ENCODE measurements at regions of chr10 and their contacts with region 1.

Region 1: DNA sequence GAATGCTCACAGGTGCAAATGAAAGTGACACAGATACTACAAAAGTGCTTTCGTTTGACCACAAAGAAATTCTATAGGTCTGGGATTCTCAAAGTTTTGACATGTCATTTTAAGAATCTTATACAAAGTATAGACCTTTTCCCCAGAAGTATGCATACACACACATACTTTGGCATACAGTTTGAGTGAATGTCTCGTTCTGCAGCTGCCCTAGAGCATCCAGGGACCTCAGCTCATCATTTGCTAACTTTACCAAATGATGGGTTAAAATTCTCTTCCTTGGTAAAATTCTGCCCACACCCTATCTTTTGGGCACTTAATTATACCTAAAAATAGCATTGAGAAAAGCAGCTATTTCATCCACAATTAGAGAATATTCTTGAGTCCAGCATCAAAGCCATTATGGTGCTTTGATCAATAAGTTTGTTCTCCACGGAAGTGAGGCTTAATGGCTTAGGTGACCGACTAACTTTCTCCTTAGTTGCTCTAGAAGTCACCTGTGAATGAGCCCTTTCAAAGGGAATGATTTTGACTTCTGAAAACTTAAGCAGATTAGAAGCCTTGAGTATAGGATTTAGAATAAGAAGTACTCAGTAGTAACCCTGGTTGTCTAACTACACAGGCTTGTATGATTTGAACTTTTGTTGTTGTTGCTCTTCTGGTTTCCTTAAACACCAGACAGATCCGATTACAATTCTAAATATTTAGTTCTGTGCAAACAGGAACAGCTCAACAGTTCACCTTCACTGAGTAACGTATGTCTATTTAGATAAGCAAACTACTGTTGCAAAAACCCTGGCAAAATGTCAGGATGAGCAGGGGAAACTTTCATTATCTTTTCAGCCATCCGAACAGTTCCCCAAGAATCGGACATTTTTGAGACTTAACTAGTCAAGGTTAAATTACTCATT is 70.6 kb downstream of the CNNM2 start:
- DNase-seq: peak; percentile 52 to 94 (median 65)
- ATAC-seq: peak; percentile 88
- H3K4me3 ChIP-seq: no peak overlapping the region
- H3K27ac ChIP-seq: peak overlapping the region; percentile 95
- H3K4me1 ChIP-seq: peaks cover 28 to 33% of the 10 kb centered on the region in 2 experiments
- H3K27me3 ChIP-seq: no peaks in the 10 kb centered on the region
- CTCF ChIP-seq: no peak
- EP300 ChIP-seq: peak; percentile 97
- POLR2A ChIP-seq: no peak
- RAD21 ChIP-seq: no peak

Region 2: DNA sequence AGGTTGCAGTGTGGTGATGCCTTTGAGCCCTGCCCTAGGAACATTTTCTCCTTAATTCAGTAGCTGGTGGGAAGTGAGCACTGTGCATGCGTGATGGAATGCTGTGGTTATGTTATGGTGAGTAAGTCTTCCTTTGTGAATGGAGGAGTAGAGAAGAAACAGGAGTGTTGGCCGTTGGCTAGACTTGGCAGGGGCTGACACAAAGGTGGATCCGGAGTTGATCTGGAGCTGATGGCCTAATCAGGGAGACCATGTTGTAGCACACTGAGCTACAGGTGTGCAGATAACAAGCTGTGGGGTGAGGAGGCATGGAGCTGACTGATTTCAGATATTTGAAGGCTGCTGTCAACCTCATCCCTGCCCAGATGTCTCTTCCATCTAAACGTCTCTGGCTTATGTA is 51.8 kb after region 1 on chr10:
- CTCF ChIA-PET with region 1: no interaction called
- POLR2A ChIA-PET with region 1: no interaction called
- in situ Hi-C with region 1: no loop called
- intact Hi-C with region 1: loop called (anchors 2 kb)
- DNase-seq: peak in 3 of 4 experiments; percentile 15 to 74 (median 46)
- ATAC-seq: peak; percentile 67
- H3K4me3 ChIP-seq: no peak overlapping the region
- H3K27ac ChIP-seq: peak overlapping the region; percentile 46; the same call in 1 of the 3 replicates
- H3K4me1 ChIP-seq: peaks cover 19 to 22% of the 10 kb centered on the region in 2 experiments
- H3K27me3 ChIP-seq: no peaks in the 10 kb centered on the region
- CTCF ChIP-seq: no peak
- EP300 ChIP-seq: peak; percentile 50; the same call in 1 of the 2 replicates
- POLR2A ChIP-seq: no peak
- RAD21 ChIP-seq: no peak